ENCODE measurements at regions of chr11 and their contacts with region 1.

Region 1: DNA sequence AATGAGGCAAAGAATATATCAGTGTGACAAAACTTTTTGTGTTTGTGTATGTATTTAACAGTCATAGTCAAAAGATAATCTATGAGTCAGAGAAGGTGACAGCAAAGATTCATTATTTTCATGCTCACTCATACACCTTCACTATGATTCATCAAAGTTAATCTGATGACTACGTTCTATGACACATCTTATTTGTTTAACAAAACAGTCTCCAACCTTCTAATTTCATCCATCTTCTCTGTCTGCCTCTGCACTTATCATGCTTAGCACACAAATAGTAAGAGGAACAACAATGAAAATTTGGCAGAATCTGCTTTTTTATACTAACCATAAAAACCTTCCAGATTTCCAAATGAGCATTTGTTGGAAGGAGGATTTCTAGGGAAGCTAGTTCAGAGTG is 568.9 kb downstream of the LUZP2 start:
- DNase-seq: no peak
- H3K4me3 ChIP-seq: no peak overlapping the region
- H3K27ac ChIP-seq: no peak overlapping the region
- H3K4me1 ChIP-seq: no peaks in the 10 kb centered on the region
- H3K27me3 ChIP-seq: no peaks in the 10 kb centered on the region
- CTCF ChIP-seq: no peak
- POLR2A ChIP-seq: no peak

Region 2: GRCh38 chr11:23359297-23359696 is 1706.4 kb before region 1 on chr11:
- intact Hi-C with region 1: loop called (anchors 10 kb)
- DNase-seq: no peak
- H3K4me3 ChIP-seq: no peak overlapping the region
- H3K27ac ChIP-seq: no peak overlapping the region
- H3K4me1 ChIP-seq: no peaks in the 10 kb centered on the region
- H3K27me3 ChIP-seq: no peaks in the 10 kb centered on the region
- CTCF ChIP-seq: no peak
- POLR2A ChIP-seq: no peak

Region 3: GRCh38 chr11:24543786-24544185 is 521.9 kb before region 1 on chr11:
- intact Hi-C with region 1: loop called (anchors 5 kb)
- DNase-seq: no peak
- H3K4me3 ChIP-seq: no peak overlapping the region
- H3K27ac ChIP-seq: no peak overlapping the region
- H3K4me1 ChIP-seq: no peaks in the 10 kb centered on the region
- H3K27me3 ChIP-seq: no peaks in the 10 kb centered on the region
- CTCF ChIP-seq: no peak
- POLR2A ChIP-seq: no peak

Region 4: GRCh38 chr11:24779791-24780190 is 285.9 kb before region 1 on chr11:
- intact Hi-C with region 1: no loop called
- DNase-seq: no peak
- H3K4me3 ChIP-seq: no peak overlapping the region
- H3K27ac ChIP-seq: no peak overlapping the region
- H3K4me1 ChIP-seq: no peaks in the 10 kb centered on the region
- H3K27me3 ChIP-seq: no peaks in the 10 kb centered on the region
- CTCF ChIP-seq: no peak
- POLR2A ChIP-seq: no peak

Region 5: DNA sequence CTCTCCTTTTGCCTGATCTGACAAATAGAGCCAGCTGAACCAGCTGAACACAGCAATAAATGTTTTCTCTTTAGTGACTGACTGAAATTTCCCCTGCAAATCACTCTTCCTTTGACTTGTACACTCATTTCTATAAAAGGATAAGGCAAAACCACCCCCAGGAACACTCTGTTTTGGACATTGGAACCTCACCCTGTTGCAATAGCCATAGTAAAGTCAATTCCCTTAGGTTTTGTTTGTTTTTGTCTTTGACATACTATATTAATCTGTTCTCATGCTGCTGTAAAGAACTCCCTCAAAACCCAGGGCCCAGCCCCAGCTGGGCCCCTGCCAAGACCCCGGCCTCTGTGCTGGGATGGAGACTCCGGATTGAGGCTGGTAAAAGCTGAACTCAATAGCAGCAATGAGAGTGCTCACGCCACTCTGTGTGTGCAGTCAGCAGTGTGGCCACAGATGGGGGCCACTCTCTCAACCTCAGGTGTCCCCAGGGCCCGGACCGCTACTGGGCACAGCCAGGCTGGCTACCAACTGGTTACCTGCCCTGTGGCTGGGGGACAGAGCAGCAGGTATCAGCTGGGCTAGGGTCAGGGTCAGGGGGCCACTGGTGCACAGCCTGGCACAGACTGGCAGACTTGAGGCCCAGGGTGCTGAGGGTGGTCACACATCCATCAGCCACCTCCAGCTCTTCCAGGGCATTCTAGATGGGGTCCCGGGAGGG is 28.5 kb after region 1 on chr11:
- intact Hi-C with region 1: no loop called
- DNase-seq: no peak
- H3K4me3 ChIP-seq: no peak overlapping the region
- H3K27ac ChIP-seq: no peak overlapping the region
- H3K4me1 ChIP-seq: no peaks in the 10 kb centered on the region
- H3K27me3 ChIP-seq: no peaks in the 10 kb centered on the region
- CTCF ChIP-seq: no peak
- POLR2A ChIP-seq: no peak